Head of caudate nucleus (tissue), 42 donors: ENCODE measurements at regions of chr15 and their contacts with region 1.

Region 1: GRCh38 chr15:84658080-84658787 is at the start of gene NMB:
- DNase-seq: peak in 41 of 42 donors; percentile 20 to 86 (median 70)

Region 2: DNA sequence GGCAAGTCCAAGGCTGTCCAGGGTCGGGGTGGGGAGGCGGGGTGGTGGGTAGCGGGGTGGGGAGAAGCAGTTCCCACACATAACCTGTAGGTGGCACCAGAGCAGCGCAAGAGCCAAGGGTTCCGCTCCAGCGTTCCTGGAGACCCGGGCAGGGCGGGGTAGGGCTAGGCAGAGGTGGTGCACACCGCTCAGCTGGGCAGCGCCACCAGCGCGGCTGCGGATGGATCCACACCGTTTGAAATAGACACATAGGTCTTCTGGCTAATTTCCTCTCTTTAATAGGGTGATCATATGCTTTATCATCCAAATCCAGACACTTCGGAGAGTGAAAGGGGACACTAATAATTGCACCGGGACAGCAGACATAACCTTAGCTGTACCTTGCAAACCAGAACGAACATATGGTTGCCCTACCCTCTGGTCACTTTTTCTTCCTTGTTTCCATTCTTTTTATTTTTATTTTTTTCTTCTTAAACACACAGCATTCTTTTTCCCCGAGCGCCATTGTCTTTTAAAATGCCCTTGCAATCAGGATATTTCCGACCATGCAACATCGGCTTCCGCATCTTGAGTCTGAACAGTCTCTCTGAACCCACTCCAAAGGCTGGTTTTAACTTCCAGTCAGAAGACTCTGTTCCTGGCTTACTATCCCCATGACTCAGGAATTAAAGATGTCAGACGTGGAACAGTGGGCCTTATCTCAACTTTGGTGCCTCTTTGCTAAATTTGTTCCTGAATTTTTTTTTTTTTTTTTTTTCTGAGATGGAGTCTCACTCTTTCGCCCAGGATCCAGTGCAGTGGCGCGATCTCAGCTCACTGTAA is 70.0 kb before region 1 on chr15:
- intact Hi-C with region 1: no loop called
- DNase-seq: peak; percentile 57 to 93 (median 84)

Region 3: DNA sequence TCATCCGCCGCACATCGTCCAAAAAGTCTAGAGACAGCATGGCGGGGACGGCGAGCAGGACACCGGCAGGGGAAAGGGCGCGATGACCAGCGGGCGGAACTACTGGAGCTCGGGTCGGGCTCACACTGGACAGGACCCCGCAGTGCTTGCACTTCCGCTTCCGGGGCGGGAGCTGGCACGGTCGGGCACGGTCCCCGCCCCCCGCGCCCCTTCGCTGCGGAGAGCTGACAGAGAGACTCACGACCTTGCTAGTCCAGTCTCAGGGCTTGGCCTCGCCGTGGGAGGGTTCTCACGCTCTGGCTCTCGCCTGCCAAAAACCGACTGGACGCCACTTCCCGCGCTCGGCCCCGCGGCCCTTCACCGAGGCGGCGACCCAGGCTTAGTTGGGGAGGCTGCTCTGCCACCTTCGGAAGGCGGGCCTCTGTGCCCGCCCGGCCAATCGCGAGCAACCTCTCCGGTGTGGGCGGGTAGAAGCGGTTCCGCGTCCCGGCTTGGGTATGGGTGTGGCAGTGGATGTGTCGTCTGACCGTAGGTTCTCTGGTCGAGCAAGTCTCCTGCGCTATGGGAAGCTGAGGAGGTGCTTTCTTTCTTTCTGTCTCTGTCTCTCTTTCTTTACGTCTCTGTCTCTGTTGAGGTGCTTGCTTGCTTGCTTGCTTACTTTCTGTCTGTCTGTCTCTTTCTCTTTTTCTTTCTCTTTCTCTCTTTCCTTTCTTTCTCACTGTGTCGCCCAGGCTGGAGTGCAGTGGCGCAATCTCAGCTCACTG is 58.0 kb after region 1 on chr15 and contains the start of gene SEC11A:
- intact Hi-C with region 1: loop called (anchors 5 kb)
- DNase-seq: peak; percentile 91 to 99 (median 96)

Region 4: DNA sequence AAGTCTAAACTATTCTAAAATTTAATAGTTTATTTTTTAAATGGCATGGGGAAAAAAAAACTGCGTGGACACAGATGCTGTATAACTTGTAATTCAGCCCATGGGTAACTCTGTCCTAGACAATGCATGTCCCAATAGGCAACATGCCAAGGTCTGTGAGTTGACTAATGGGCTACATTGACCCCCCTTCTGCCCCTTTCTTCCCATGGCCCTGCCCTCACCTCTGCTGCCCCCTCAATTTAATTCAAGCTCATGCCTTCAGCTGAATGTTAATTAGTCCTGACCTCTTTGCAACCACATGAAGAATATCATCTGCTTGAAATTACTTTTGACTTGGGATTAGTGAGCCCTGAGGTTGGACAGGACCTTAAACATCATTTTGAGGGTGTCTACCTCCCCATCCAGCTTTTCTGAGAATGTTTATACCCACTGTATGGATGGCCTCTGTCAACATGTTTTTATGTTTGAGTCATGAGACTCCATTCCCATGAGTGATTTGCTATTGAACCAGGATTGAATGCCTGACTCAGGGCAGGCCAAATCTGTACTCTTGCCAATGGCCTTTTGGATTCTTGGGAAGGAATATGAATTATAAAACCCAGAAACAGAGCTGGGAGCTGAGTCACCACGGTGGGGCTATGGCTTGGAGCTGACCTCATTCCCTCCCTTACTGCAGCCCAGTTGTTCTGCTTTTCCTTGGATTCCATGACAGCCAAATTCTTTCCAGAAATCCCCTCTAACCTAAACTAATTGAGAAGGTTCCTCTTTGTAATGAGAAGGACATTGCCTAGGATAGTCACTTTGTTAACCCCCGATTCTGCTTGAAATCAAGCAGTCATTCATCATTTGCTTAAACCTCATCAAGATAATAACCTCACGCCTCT is 290.0 kb after region 1 on chr15:
- intact Hi-C with region 1: loop called (anchors 10 kb)
- DNase-seq: peak in 5 of 42 donors; percentile 20 to 70 (median 25)